Ascending aorta (tissue), 2 donors: ENCODE measurements at regions of chr11 and their contacts with region 1.

Region 1: GRCh38 chr11:62726915-62727763 is at the start of gene HNRNPUL2:
- DNase-seq: peak; percentile 91 to 98
- H3K4me3 ChIP-seq: peak within 1 kb of the TSS; percentile 98 to 99
- H3K27ac ChIP-seq: peak within 1 kb of the TSS; percentile 92 to 95
- H3K4me1 ChIP-seq: peaks cover 5 to 42% of the 10 kb centered on the region in 2 donors
- H3K27me3 ChIP-seq: no peaks in the 10 kb centered on the region
- CTCF ChIP-seq: no peak
- total RNA-seq, gene HNRNPUL2: 14.6 TPM

Region 2: DNA sequence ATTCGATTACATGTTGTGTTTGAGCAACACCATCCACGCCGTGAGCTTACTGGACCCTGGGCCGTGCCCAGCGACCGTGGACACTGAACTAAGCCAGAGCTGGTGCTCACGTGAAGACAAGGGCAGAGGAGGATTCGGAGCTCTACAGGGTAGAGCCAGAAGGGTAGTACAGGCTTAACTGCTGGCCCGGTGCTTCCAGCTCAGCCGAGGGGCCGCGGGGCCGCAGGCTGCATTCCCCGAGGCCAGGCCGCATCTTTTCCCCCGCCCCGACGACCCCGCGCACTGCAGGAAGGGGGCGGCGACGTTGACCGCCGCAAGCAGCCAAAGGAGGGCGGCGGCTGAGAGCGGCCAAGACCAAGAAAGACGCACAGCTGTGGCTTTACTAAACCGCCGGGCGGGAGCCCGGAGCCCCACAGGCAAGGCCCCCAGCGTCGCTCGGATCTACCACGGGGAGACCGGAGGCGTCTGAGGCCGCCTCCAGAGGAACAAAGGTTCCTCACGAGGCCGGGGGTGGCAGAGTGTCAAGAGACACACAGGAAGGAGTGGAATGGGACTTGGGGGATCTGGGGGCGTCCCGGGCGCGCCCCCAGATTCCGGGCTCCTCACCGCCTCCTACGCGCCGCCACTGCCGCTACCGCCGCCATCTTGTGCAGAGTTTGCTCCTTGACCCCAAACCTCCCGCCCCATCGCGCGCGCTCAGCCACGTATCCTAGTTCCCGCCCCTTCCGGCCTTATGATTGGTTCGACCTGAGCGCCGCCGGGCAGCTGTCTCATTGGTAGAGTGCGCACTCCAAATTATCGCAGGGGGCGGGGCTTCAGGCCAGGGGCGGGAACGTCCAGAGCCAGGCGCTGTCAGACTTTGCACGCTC is 80.9 kb before region 1 on chr11 and contains the start of gene GANAB:
- intact Hi-C with region 1: loop called (anchors 1 kb)
- DNase-seq: peak; percentile 97 to 100
- H3K4me3 ChIP-seq: peak within 1 kb of the TSS; percentile 66 to 92
- H3K27ac ChIP-seq: peak within 1 kb of the TSS; percentile 89 to 92
- H3K4me1 ChIP-seq: peaks cover 4 to 14% of the 10 kb centered on the region in 2 donors
- H3K27me3 ChIP-seq: no peaks in the 10 kb centered on the region
- CTCF ChIP-seq: no peak
- total RNA-seq, gene GANAB: 326 TPM

Region 3: DNA sequence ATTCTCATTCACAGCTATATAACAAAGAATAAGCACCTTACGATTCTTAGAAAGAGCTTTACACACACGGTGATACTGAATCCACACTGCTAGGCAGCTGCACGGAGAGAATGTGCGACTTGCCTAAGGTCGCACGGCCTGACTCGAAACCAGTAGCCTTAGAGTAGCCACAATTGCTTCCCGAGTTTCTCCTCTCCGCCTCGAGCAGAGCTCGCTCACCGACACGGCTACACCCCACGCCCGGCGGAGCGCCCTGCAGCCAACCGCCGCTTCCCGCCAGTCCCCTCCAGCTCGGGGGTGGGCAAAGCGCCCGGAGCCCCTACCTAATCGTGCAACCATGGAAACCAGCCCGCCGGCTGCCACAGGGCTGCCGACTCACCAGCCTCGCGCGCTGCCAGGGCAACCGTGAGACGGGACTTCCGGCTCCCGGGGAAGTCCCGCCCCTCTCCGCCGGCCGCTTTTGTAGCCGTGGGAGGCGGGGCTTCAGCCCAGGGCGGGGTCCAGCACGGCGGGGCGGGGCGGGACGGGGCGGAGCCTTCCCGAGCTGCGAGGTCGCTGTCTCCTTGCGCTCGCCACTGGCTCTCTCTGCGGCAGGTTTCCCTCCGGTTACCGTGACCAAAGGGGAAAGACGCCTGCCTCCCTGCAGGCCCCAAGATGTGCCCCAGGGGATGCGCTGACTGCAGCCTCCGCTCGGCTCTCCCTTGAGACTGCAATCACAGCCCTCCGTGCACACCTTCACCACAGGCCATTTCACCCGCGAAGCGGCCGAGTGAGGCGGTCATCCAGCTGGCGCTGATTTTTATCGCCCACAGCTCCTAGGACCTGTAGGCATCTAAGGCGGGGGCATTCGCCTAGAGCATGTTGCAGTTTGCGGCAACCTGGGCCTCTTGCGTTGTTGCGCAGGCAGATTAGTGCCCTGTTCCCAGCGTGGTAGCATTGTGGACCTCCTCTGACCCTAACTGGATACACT is 21.0 kb before region 1 on chr11:
- intact Hi-C with region 1: loop called (anchors 1 kb)
- DNase-seq: peak; percentile 85 to 98
- H3K4me3 ChIP-seq: peak overlapping the region; percentile 75 to 76
- H3K27ac ChIP-seq: peak overlapping the region; percentile 61 to 86
- H3K4me1 ChIP-seq: peaks cover 8 to 21% of the 10 kb centered on the region in 2 donors
- H3K27me3 ChIP-seq: no peaks in the 10 kb centered on the region
- CTCF ChIP-seq: no peak

Region 4: GRCh38 chr11:62771144-62772021 is 44.2 kb after region 1 on chr11 and contains the start of gene TAF6L:
- intact Hi-C with region 1: loop called (anchors 1 kb)
- DNase-seq: peak; percentile 94 to 99
- H3K4me3 ChIP-seq: peak within 1 kb of the TSS; percentile 73 to 84
- H3K27ac ChIP-seq: peak within 1 kb of the TSS; percentile 93 to 97
- H3K4me1 ChIP-seq: peaks cover 3 to 17% of the 10 kb centered on the region in 2 donors
- H3K27me3 ChIP-seq: no peaks in the 10 kb centered on the region
- CTCF ChIP-seq: no peak
- total RNA-seq, gene TAF6L: 51.7 TPM

Region 5: GRCh38 chr11:62831520-62832335 is 104.6 kb after region 1 on chr11 and contains the start of gene STX5:
- intact Hi-C with region 1: loop called (anchors 2 kb)
- DNase-seq: peak; percentile 96 to 100
- H3K4me3 ChIP-seq: peak within 1 kb of the TSS; percentile 74 to 77
- H3K27ac ChIP-seq: peak within 1 kb of the TSS; percentile 90 to 95
- H3K4me1 ChIP-seq: peaks cover 0 to 31% of the 10 kb centered on the region in 2 donors
- H3K27me3 ChIP-seq: no peaks in the 10 kb centered on the region
- CTCF ChIP-seq: no peak
- total RNA-seq, gene STX5: 40.3 TPM